Naive thymus-derived CD4-positive, alpha-beta T cell (primary cell): ENCODE measurements at regions of chrX and their contacts with region 1.

Region 1: DNA sequence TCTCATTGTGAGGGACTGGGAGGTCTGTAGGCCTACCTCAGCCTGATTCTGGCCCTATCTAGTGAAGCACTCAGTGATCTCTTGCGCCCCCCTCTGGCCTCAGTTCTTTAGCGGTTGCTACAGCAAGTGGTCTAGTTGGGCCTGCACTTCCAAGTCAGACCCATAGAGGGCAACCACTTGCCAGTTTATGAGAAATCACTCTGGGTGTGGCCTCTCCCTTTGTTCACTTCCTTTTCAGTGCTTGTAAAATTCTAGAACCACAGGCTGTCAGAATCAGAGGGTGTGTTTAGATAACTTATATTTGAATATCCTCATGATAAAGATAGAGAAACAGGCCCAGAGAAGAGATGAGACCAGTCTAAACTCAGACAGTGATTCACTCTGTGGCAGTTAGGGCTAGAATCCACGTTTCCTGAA is 60.9 kb upstream of the LAS1L start:
- DNase-seq: peak; percentile 67 to 94 (median 87)
- ATAC-seq: peak; percentile 97
- H3K4me3 ChIP-seq: peak overlapping the region; percentile 41
- H3K4me3 Mint-ChIP-seq: peak overlapping the region in 9 of 10 donors; percentile 58 to 79 (median 76)
- H3K27ac ChIP-seq: peak overlapping the region; percentile 74
- H3K27ac Mint-ChIP-seq: peak overlapping the region; percentile 89 to 100 (median 96)
- H3K4me1 ChIP-seq: peaks cover 38 to 41% of the 10 kb centered on the region in 2 donors
- H3K4me1 Mint-ChIP-seq: peaks cover 27 to 59% (median 50%) of the 10 kb centered on the region in 7 donors
- H3K27me3 ChIP-seq: no peaks in the 10 kb centered on the region
- H3K27me3 Mint-ChIP-seq: no peaks in the 10 kb centered on the region

Region 2: DNA sequence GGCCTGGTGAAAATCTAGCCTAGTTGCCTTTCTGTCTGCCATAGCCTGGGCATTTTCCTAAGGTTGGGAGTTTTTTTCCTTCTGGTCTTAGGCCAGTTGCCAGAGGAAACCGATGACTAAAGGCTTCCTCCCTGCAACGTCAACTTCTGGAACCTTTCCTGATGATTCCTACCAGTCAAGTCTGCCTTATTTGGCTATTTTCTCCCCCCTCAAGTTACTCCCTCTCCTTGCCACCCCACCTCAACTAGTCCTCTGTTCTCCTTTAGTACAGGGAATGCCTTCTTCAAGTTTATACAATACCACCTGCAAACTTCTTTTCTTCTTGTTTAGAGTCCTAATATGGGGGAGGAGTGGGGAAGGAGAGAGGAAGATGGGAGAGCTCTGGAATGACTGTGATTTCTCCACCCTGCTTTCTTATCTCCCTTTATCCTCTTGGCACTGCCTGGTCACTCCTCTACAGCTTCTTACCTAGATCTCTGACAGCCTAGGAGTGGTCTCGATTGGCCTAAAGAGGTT is 82.5 kb after region 1 on chrX:
- CTCF ChIA-PET with region 1: interaction called, 4 read pairs
- POLR2A ChIA-PET with region 1: no interaction called
- intact Hi-C with region 1: loop called in 1 of 2 experiments (anchors 1 kb)
- DNase-seq: no peak
- ATAC-seq: no peak
- H3K4me3 ChIP-seq: no peak overlapping the region
- H3K4me3 Mint-ChIP-seq: peak overlapping the region; percentile 41 to 94 (median 71)
- H3K27ac ChIP-seq: no peak overlapping the region
- H3K27ac Mint-ChIP-seq: peak overlapping the region in 8 of 9 donors; percentile 23 to 88 (median 82)
- H3K4me1 ChIP-seq: peaks cover 66 to 82% of the 10 kb centered on the region in 2 donors
- H3K4me1 Mint-ChIP-seq: peaks cover 40 to 95% (median 85%) of the 10 kb centered on the region in 7 donors
- H3K27me3 ChIP-seq: no peaks in the 10 kb centered on the region
- H3K27me3 Mint-ChIP-seq: no peaks in the 10 kb centered on the region

Region 3: DNA sequence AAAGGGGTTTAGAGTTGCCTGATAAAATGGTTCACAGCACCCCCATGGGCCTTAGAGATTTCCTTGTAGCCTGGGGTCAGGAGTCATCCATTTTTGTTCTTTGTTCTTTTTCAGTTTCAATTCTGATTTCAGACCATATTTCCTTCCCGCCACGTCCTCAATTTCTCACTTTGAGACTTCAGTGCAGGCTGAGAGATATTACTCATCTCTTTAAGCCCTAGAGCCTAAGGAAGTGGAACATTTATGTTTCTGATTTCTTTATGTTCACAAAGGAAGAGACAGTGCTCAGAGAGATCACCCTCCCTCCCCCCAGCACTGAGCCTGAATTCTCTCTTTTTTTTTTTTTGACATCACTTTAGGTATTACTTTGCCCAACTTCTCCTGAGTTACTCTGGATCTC is 128.2 kb after region 1 on chrX:
- CTCF ChIA-PET with region 1: interaction called, 3 read pairs
- POLR2A ChIA-PET with region 1: no interaction called
- intact Hi-C with region 1: loop called (anchors 1 kb)
- DNase-seq: peak in 3 of 9 donors; percentile 16 to 50 (median 20)
- ATAC-seq: peak; percentile 59
- H3K4me3 ChIP-seq: no peak overlapping the region
- H3K4me3 Mint-ChIP-seq: peak overlapping the region; percentile 22 to 75 (median 60)
- H3K27ac ChIP-seq: peak overlapping the region; percentile 66
- H3K27ac Mint-ChIP-seq: peak overlapping the region; percentile 41 to 92 (median 84)
- H3K4me1 ChIP-seq: peaks cover 54 to 68% of the 10 kb centered on the region in 2 donors
- H3K4me1 Mint-ChIP-seq: peaks cover 45 to 95% (median 86%) of the 10 kb centered on the region in 7 donors
- H3K27me3 ChIP-seq: no peaks in the 10 kb centered on the region
- H3K27me3 Mint-ChIP-seq: no peaks in the 10 kb centered on the region

Region 4: GRCh38 chrX:65783746-65784145 is 188.3 kb after region 1 on chrX:
- CTCF ChIA-PET with region 1: no interaction called
- POLR2A ChIA-PET with region 1: no interaction called
- intact Hi-C with region 1: no loop called
- DNase-seq: no peak
- ATAC-seq: no peak
- H3K4me3 ChIP-seq: no peak overlapping the region
- H3K4me3 Mint-ChIP-seq: peak overlapping the region in 1 of 10 donors; percentile 52
- H3K27ac ChIP-seq: no peak overlapping the region
- H3K27ac Mint-ChIP-seq: peak overlapping the region in 2 of 9 donors; percentile 44 to 58
- H3K4me1 ChIP-seq: no peaks in the 10 kb centered on the region
- H3K4me1 Mint-ChIP-seq: peaks cover 5 to 19% (median 10%) of the 10 kb centered on the region in 7 donors
- H3K27me3 ChIP-seq: no peaks in the 10 kb centered on the region
- H3K27me3 Mint-ChIP-seq: peaks cover 0 to 2% (median 0%) of the 10 kb centered on the region in 5 donors

Region 5: GRCh38 chrX:65879977-65880799 is 284.7 kb after region 1 on chrX:
- CTCF ChIA-PET with region 1: no interaction called
- POLR2A ChIA-PET with region 1: no interaction called
- intact Hi-C with region 1: loop called in 1 of 2 experiments (anchors 5 kb)
- DNase-seq: no peak
- ATAC-seq: no peak
- H3K4me3 ChIP-seq: no peak overlapping the region
- H3K4me3 Mint-ChIP-seq: no peak overlapping the region
- H3K27ac ChIP-seq: no peak overlapping the region
- H3K27ac Mint-ChIP-seq: no peak overlapping the region
- H3K4me1 ChIP-seq: peaks cover 0 to 13% of the 10 kb centered on the region in 2 donors
- H3K4me1 Mint-ChIP-seq: peaks cover 19 to 37% (median 24%) of the 10 kb centered on the region in 7 donors
- H3K27me3 ChIP-seq: no peaks in the 10 kb centered on the region
- H3K27me3 Mint-ChIP-seq: peaks cover 0 to 2% (median 0%) of the 10 kb centered on the region in 5 donors

Region 6: GRCh38 chrX:66039944-66040343 is 444.5 kb after region 1 on chrX and contains the start of gene VSIG4:
- CTCF ChIA-PET with region 1: no interaction called
- POLR2A ChIA-PET with region 1: no interaction called
- intact Hi-C with region 1: loop called in 1 of 2 experiments (anchors 5 kb)
- DNase-seq: no peak
- ATAC-seq: no peak
- H3K4me3 ChIP-seq: no peak within 1 kb of the TSS
- H3K4me3 Mint-ChIP-seq: no peak within 1 kb of the TSS
- H3K27ac ChIP-seq: no peak within 1 kb of the TSS
- H3K27ac Mint-ChIP-seq: no peak within 1 kb of the TSS
- H3K4me1 ChIP-seq: no peaks in the 10 kb centered on the region
- H3K4me1 Mint-ChIP-seq: peaks cover 0 to 11% (median 3%) of the 10 kb centered on the region in 7 donors
- H3K27me3 ChIP-seq: no peaks in the 10 kb centered on the region
- H3K27me3 Mint-ChIP-seq: no peaks in the 10 kb centered on the region
- total RNA-seq, gene VSIG4: 0.32 to 1.8 (median 1.0) TPM in 4 of 5 experiments, not detected in the other

Region 7: GRCh38 chrX:67114635-67115034 is 1519.2 kb after region 1 on chrX:
- CTCF ChIA-PET with region 1: no interaction called
- POLR2A ChIA-PET with region 1: no interaction called
- intact Hi-C with region 1: no loop called
- DNase-seq: no peak
- ATAC-seq: no peak
- H3K4me3 ChIP-seq: no peak overlapping the region
- H3K4me3 Mint-ChIP-seq: no peak overlapping the region
- H3K27ac ChIP-seq: no peak overlapping the region
- H3K27ac Mint-ChIP-seq: no peak overlapping the region
- H3K4me1 ChIP-seq: no peaks in the 10 kb centered on the region
- H3K4me1 Mint-ChIP-seq: no peaks in the 10 kb centered on the region
- H3K27me3 ChIP-seq: no peaks in the 10 kb centered on the region
- H3K27me3 Mint-ChIP-seq: no peaks in the 10 kb centered on the region